ENCODE measurements at regions of chr11 and their contacts with region 1.

Region 1: DNA sequence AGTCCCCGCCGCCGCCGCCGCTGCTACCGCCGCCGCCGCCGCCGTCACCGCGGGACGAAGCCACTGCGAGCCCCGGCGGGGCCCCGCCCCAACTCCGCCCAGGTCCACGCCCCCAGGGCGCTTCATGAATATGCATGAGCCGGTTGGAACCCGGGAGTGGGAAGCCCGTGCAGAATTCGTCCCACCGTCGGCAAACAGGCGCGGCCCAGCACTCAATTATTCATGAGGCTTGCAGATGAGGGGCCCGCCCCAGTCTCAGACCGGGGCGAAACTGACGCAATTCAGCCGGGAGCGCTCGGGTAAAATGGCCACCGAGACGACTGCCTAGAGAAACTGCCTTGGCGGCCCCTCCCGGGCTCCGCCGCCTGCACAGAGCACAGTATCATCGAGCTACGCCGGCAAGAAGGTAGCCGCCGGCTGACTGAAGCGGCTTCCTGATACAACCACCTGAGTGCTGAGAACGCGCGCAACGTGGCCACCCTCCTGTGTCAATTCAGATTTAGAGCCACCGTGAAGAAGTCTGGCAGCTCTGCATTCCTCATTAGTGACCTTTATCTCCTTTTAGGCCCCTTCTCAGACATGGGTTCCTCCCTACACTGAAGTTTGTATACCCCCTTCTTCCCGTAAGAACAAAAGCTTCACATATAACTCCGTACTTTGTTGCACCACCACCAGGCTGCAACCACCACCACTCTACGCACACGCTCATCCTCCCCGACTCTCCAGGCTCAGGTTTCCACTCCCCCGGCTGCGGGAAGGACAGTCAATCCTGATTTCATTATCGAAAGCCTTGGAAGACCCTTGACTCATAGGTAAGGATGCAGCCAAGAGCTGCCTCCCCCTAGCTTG is at the start of gene TNKS1BP1:
- DNase-seq: peak; percentile 88 to 97 (median 96)
- H3K4me3 ChIP-seq: peak within 1 kb of the TSS; percentile 54 to 90 (median 75)
- H3K27ac ChIP-seq: peak within 1 kb of the TSS; percentile 55 to 95 (median 88)
- H3K27me3 ChIP-seq: no peaks in the 10 kb centered on the region
- CTCF ChIP-seq: peak in 23 of 56 donors; percentile 4 to 39 (median 18)
- total RNA-seq, gene TNKS1BP1: 31.3 to 111 (median 55.2) TPM

Region 2: GRCh38 chr11:56988614-56989013 is 336.5 kb before region 1 on chr11 and contains the start of gene OR5AK2:
- intact Hi-C with region 1: no loop called
- DNase-seq: no peak
- H3K4me3 ChIP-seq: no peak within 1 kb of the TSS
- H3K27ac ChIP-seq: no peak within 1 kb of the TSS
- H3K27me3 ChIP-seq: peaks cover 0 to 10% (median 0%) of the 10 kb centered on the region in 45 donors
- CTCF ChIP-seq: no peak
- total RNA-seq, gene OR5AK2: not detected

Region 3: DNA sequence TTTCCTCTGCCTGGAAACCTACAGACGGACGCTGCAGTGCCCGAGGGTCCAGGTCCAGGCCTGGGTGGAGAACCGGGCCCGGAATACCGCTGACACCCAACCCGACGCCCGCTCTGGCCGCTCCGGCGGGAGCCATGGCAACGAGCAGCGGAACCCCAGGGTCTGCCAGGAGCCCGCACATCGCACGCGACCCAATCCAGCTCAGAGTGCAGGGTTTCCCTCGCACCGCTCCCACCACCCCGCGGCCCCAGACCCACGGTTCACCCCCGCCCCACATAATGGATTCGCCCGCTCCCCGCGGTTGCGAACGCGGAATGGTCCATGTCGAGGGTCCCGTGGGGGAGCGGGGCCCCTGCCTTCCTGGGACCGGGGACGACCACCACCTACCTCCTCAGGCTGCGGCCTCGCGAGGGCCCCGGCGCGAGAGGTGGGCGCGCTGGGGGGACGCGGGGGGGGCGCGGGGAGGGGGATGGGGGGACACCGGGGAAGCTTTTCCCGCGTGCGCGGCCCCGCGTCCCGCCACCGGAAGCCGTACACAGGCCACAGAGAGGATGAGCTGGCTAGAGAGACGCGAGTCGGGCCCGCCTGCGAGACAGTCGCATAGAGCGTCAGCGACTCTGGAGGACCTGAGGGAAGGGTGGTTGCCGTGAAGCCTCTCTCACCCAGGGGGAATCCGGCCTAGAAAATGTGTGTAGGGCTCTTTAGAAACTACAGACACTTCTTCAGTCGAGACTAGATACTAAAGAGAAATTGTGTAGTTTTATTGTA is 10.4 kb after region 1 on chr11 and contains the start of gene SSRP1:
- intact Hi-C with region 1: loop called in 1 of 2 experiments (anchors 1 kb)
- DNase-seq: peak; percentile 81 to 95 (median 92)
- H3K4me3 ChIP-seq: peak within 1 kb of the TSS; percentile 47 to 98 (median 88)
- H3K27ac ChIP-seq: peak within 1 kb of the TSS; percentile 35 to 96 (median 84)
- H3K27me3 ChIP-seq: no peaks in the 10 kb centered on the region
- CTCF ChIP-seq: peak in 53 of 56 donors; percentile 15 to 65 (median 37)
- total RNA-seq, gene SSRP1: 43.7 to 71.1 (median 56.7) TPM

Region 4: DNA sequence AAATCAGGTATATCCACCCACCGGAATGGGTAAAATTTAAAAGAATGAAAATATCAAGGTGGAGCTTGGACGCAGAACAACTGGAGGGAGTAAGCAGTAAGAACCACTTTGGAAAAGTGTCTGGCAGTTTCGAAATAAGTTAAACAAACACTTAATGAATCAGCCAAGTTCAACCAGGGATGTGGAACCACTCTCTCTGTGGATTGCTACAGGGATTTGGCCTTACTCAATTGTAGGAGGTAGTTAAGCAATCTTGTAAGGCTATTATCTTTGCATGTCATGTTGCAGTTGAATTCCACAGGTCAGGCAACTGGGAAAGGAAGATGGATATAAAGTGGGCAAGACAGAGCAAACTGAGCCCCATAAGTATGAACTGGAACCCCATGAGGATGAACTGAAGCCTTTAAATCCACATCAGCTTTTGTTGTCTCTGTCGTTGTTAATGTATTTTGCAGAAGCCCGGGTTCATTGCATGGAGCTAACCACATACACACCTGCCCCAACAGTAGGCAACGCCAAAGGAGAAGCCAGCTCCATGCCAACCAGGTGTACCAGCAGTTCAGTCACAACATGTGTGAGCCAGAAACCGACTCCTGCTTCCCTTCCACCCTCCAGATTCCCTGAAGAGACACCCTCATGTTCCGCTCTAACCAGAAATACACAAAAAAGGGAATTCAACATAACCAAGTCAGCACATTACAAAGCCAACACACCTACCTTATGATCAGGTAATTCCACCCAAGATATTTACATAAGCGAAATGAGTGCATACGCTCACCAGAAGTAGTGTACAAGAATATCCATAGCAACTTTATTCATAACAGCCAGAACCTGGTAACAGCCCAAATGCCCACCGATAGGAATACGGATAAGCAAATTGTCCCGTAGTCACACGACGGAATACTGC is 109.8 kb after region 1 on chr11:
- intact Hi-C with region 1: no loop called
- DNase-seq: no peak
- H3K4me3 ChIP-seq: no peak overlapping the region
- H3K27ac ChIP-seq: no peak overlapping the region
- H3K27me3 ChIP-seq: no peaks in the 10 kb centered on the region
- CTCF ChIP-seq: no peak

Region 5: GRCh38 chr11:57815476-57815875 is 490.4 kb after region 1 on chr11:
- intact Hi-C with region 1: loop called in 1 of 2 experiments (anchors 10 kb)
- DNase-seq: no peak
- H3K4me3 ChIP-seq: no peak overlapping the region
- H3K27ac ChIP-seq: peak overlapping the region in 2 of 59 donors; percentile 11 to 16
- H3K27me3 ChIP-seq: no peaks in the 10 kb centered on the region
- CTCF ChIP-seq: no peak

Region 6: DNA sequence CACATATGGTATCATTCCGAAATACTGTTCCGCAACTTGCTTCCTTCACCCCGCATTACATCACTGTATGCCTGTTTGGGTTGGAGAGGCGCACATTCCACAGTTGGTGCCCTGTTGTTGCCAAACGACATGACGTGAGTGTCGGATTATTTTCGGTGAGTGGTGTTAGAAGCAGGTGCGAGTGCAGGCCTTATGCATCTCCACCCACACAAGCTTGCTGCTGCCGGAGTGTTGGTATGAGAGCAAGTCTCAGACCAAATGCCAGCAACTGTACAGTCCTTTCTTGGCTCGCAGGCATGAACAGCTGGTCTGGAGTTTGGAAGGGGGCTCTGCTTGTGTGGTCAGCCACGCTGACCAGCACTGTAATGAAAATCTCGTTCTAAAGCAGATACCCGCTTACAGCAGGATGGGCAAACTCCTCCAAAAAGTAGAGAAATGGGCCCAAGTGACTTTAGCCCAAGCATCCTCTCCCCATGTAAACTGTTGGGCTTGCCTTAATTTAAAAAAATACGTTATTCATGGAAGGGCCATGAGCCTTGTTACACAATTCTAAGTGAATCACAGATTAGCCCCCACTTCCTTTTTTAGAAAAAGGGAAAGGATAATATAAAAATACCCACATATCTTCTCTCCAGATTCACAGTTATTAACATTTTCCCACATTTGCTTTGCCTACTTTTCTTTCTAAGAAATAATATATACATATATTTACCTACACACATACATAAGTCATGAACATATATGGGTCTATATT is 649.9 kb after region 1 on chr11:
- intact Hi-C with region 1: no loop called
- DNase-seq: peak in 7 of 10 donors; percentile 33 to 66 (median 50)
- H3K4me3 ChIP-seq: no peak overlapping the region
- H3K27ac ChIP-seq: peak overlapping the region in 3 of 59 donors; percentile 0 to 47 (median 31)
- H3K27me3 ChIP-seq: no peaks in the 10 kb centered on the region
- CTCF ChIP-seq: no peak

Measured in dorsolateral prefrontal cortex (tissue), 120 donors.